ENCODE measurements at regions of chr2 and their contacts with region 1.

Region 1: GRCh38 chr2:151437630-151438029 is 27.9 kb downstream of the RIF1 start:
- DNase-seq: no peak
- ATAC-seq: peak; percentile 37
- H3K4me3 Mint-ChIP-seq: no peak overlapping the region
- H3K27ac Mint-ChIP-seq: no peak overlapping the region
- H3K4me1 Mint-ChIP-seq: no peaks in the 10 kb centered on the region
- H3K27me3 Mint-ChIP-seq: no peaks in the 10 kb centered on the region
- CTCF ChIP-seq: peak; percentile 46

Region 2: GRCh38 chr2:151197184-151198108 is 240.2 kb before region 1 on chr2:
- CTCF ChIA-PET with region 1: no interaction called
- POLR2A ChIA-PET with region 1: no interaction called
- intact Hi-C with region 1: loop called (anchors 10 kb)
- DNase-seq: no peak
- ATAC-seq: no peak
- H3K4me3 Mint-ChIP-seq: no peak overlapping the region
- H3K27ac Mint-ChIP-seq: no peak overlapping the region
- H3K4me1 Mint-ChIP-seq: no peaks in the 10 kb centered on the region
- H3K27me3 Mint-ChIP-seq: peaks cover 2% of the 10 kb centered on the region
- CTCF ChIP-seq: no peak

Region 3: GRCh38 chr2:151525821-151526373 is 88.3 kb after region 1 on chr2:
- CTCF ChIA-PET with region 1: no interaction called
- POLR2A ChIA-PET with region 1: no interaction called
- intact Hi-C with region 1: no loop called
- DNase-seq: peak; percentile 32
- ATAC-seq: peak; percentile 92
- H3K4me3 Mint-ChIP-seq: peak overlapping the region; percentile 70
- H3K27ac Mint-ChIP-seq: peak overlapping the region; percentile 77
- H3K4me1 Mint-ChIP-seq: peaks cover 18% of the 10 kb centered on the region
- H3K27me3 Mint-ChIP-seq: no peaks in the 10 kb centered on the region
- CTCF ChIP-seq: no peak

Measured in activated B cell treated with CpG ODN at 0.5 μM for 24 hours (primary cell).